AG04449 (cell line): ENCODE measurements at regions of chr21 and their contacts with region 1.

Region 1: DNA sequence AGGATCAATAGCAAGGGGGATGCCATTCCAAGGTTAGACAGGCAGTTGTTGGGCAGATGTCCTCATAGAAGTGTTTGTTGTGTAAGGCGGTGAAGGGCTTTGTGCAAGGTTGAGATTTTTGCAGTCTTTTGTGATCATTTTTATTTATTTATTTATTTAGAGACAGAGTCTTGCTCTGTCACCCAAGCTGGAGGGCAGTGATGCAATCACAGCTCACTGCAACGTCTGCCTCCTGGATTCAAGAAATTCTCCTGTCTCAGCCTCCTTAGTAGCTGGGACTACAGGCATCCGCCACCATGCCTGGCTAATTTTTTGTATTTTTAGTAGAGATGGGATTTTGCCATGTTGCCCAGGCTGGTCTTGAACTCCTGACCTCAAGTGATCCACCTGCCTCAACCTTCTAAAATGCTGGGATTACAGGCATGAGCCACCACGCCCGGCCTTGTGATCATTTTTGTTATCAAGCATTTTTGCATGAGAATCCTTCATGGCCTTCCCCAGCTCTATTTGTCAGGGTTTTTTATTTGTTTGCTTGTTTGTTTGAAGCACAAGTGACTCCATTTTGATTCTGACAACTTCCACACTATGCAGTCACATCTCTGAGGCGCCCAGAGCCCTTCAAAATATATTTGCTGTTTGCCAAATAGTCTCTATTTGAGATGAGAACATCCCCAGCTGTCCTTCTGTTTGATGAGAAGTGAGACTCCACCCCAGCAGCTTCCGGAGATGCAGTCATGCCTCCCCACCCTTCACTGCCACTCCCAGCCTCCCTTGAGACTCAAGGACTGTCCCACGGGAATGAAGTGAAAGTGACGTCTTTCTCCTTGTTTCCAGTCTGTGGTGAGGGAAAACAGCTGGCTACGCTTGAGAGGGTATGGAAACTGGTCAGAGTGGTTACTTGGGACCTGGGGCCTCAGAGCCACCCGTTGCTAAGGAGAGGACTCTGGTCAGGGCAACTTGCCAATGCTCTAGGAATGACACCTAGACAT is 38.0 kb downstream of the TMEM50B start:
- DNase-seq: peak; percentile 33
- H3K4me3 ChIP-seq: no peak overlapping the region
- CTCF ChIP-seq: no peak

Region 2: DNA sequence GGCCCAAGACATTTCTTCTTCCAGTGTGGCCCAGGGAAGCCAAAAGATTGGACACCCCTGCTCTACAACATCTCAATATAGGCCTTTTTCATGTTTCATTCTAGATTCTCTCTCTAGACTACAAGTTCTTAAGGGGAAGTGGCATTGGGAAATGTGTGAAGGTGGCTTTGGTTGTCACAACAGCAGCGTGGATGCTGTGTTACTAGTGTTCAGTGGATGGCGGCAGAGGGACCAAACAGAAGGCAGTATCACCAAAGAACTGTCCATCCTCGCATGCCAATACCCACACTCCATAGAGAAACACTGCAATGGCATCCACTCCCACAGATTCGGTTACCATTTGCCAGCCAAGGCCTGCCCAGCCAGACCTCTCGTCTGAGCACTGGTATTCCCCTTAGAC is 236.3 kb before region 1 on chr21:
- CTCF ChIA-PET with region 1: interaction called, 58 read pairs
- POLR2A ChIA-PET with region 1: no interaction called
- DNase-seq: no peak
- H3K4me3 ChIP-seq: no peak overlapping the region
- CTCF ChIP-seq: no peak

Region 3: DNA sequence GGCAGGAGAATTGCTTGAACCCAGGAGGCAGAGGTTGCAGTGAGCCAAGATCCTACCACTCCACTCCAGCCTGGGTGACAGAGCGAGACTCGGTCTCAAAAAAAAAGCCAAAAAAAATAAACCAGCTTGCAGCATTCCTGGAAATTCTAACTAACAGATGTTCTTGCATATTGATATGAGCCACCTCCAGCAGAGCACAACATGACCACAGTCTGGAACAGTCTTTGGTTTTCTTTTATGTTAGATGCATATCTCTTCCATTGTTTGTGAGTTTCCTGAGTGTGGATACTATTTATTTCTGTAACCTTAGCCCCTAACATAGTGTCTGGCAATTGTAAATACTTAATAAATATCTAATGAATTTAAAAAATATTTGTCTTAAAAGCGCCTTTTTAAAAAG is 93.1 kb before region 1 on chr21:
- CTCF ChIA-PET with region 1: interaction called, 17 read pairs
- POLR2A ChIA-PET with region 1: interaction called, 3 read pairs
- DNase-seq: no peak
- H3K4me3 ChIP-seq: no peak overlapping the region
- CTCF ChIP-seq: no peak

Region 4: GRCh38 chr21:33412832-33413519 is 28.8 kb before region 1 on chr21:
- CTCF ChIA-PET with region 1: interaction called, 16 read pairs
- POLR2A ChIA-PET with region 1: interaction called, 3 read pairs
- DNase-seq: no peak
- H3K4me3 ChIP-seq: no peak overlapping the region
- CTCF ChIP-seq: no peak

Region 5: DNA sequence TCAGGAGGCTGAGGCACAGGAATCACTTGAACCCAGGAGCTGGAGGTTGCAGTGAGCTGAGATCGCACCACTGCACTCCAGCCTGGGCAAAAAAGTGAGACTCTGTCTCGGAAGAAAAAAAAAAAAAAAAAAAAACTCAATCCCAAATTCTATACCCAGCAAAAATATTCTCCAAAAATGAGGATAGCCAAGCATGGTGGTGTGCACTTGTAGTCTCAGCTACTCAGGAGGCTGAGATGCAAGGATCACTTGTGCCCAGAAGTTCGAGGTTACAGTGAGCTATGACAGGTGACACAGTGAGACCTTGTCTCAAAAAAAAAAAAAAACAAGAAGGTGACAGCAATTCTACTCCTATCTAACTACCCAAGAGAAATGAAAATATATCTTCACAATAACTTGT is 31.6 kb after region 1 on chr21:
- CTCF ChIA-PET with region 1: no interaction called
- POLR2A ChIA-PET with region 1: no interaction called
- DNase-seq: no peak
- H3K4me3 ChIP-seq: no peak overlapping the region
- CTCF ChIP-seq: no peak